ENCODE measurements at regions of chr3 and their contacts with region 1.

Region 1: GRCh38 chr3:25648107-25648535 is 16.6 kb downstream of the TOP2B start:
- DNase-seq: peak; percentile 67
- ATAC-seq: peak; percentile 91
- H3K4me3 ChIP-seq: no peak overlapping the region
- H3K27ac ChIP-seq: no peak overlapping the region
- H3K4me1 ChIP-seq: no peaks in the 10 kb centered on the region
- H3K27me3 ChIP-seq: no peaks in the 10 kb centered on the region
- CTCF ChIP-seq: peak; percentile 81

Region 2: DNA sequence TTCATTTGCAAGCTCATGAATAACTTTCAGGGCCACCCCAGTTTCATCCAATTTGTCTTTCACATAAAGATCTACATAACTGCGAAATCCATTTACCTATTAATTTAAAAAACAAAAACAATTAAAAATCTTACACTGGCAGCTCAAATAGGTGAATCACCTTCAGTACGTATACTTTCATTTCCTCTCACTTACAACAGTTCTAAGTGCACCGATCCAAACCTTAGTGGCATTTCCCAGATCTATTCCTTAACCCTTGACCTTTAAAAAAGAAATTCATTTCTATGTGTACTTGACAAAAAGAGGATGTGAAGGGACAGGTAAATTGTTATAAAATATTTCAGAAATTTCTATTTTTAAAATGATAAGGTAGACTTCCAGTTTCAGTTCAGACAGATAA is 14.2 kb before region 1 on chr3:
- CTCF ChIA-PET with region 1: no interaction called
- POLR2A ChIA-PET with region 1: no interaction called
- in situ Hi-C with region 1: no loop called
- intact Hi-C with region 1: no loop called
- DNase-seq: no peak
- ATAC-seq: no peak
- H3K4me3 ChIP-seq: no peak overlapping the region
- H3K27ac ChIP-seq: no peak overlapping the region
- H3K4me1 ChIP-seq: no peaks in the 10 kb centered on the region
- H3K27me3 ChIP-seq: no peaks in the 10 kb centered on the region
- CTCF ChIP-seq: no peak

Region 3: GRCh38 chr3:25713335-25713985 is 65.3 kb after region 1 on chr3:
- CTCF ChIA-PET with region 1: no interaction called
- POLR2A ChIA-PET with region 1: no interaction called
- in situ Hi-C with region 1: no loop called
- intact Hi-C with region 1: no loop called
- DNase-seq: no peak
- ATAC-seq: no peak
- H3K4me3 ChIP-seq: no peak overlapping the region
- H3K27ac ChIP-seq: no peak overlapping the region
- H3K4me1 ChIP-seq: no peaks in the 10 kb centered on the region
- H3K27me3 ChIP-seq: no peaks in the 10 kb centered on the region
- CTCF ChIP-seq: no peak

Region 4: DNA sequence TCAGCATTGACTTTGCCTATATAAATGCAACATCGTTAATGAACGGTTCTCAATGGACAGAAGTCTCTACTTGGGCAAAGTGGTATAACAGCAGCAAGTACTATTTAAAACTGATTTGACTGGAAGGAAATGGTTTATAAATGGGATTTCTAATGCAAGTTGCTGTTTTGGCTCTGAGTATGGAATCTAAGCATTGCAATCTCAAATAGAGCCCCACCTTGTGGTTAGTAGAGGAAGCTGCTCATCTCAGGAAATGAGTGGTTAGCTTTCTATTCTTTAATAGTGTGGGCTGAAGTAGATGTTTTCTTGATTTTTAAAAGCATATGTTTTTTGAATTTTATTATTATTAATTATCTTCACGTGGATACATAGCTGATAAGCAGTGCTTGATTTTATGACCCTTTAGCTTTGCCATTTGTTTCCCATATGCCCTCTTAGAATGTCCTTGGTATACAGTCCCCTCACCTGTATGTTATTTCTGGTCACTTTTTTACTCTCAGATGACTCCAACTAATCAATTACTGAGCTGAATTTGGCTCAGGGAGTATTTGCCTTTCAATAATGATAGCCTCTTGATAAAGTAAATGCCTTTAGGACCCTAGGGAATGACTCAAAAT is 208.9 kb after region 1 on chr3:
- CTCF ChIA-PET with region 1: interaction called, 3 read pairs
- POLR2A ChIA-PET with region 1: no interaction called
- in situ Hi-C with region 1: no loop called
- intact Hi-C with region 1: loop called (anchors 2 kb)
- DNase-seq: no peak
- ATAC-seq: no peak
- H3K4me3 ChIP-seq: no peak overlapping the region
- H3K27ac ChIP-seq: no peak overlapping the region
- H3K4me1 ChIP-seq: no peaks in the 10 kb centered on the region
- H3K27me3 ChIP-seq: no peaks in the 10 kb centered on the region
- CTCF ChIP-seq: peak; percentile 61; the same call in 1 of the 2 replicates